RWPE1 (cell line): ENCODE measurements at regions of chr2 and their contacts with region 1.

Region 1: DNA sequence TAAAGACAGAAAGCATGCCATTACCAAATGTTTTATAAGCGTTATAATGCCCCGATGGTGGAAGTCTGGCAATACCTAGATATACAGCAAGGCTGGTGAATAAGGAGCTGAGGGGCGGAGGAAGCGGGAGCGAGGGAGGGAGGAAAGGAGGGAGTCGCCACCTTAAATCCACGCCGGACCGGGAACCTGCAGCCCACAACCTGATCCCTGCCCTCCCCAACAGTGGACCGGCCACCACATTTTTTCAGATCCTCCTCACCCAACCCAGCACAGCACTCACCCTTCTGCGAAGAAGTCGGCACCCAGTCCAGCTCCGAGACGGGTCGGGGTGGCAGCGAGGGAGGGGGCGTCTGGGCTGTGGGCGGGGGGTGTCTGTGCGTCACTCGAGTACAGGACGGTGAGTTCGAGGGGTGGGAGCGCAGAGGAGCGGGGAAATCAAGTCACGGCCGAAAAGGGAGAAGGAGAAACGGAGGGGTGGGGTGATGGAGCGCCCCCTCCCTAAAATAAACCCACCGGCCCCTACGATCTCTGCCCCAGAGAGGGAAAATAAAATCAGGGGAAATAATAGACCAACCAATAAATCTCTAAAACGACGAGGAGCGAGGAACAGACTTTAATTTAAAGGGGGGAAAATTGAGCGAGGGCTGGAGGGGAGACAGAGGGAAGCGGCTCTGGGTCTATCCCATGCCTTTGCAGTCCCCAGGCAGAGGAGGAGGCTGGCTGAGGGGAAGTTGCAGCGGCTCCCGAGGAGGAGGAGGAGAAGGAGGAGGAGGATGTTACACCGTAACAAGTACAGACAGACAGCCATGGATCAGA is 96.5 kb upstream of the SERTAD2 start:
- DNase-seq: peak; percentile 32
- H3K27ac ChIP-seq: peak overlapping the region; percentile 98
- CTCF ChIP-seq: no peak

Region 2: GRCh38 chr2:64727013-64727767 is 23.0 kb before region 1 on chr2:
- CTCF ChIA-PET with region 1: interaction called, 3 read pairs
- POLR2A ChIA-PET with region 1: interaction called, 12 read pairs
- DNase-seq: no peak
- H3K27ac ChIP-seq: no peak overlapping the region
- CTCF ChIP-seq: no peak

Region 3: GRCh38 chr2:64793701-64794100 is 43.5 kb after region 1 on chr2:
- CTCF ChIA-PET with region 1: interaction called, 3 read pairs
- POLR2A ChIA-PET with region 1: interaction called, 12 read pairs
- DNase-seq: no peak
- H3K27ac ChIP-seq: no peak overlapping the region
- CTCF ChIP-seq: no peak